Left cardiac atrium (tissue), 4 donors: ENCODE measurements at regions of chr6 and their contacts with region 1.

Region 1: GRCh38 chr6:126721581-126722145 is 381.7 kb downstream of the CENPW start:
- DNase-seq: no peak
- ATAC-seq: peak in 1 of 2 donors; percentile 68

Region 2: GRCh38 chr6:126614642-126615452 is 106.8 kb before region 1 on chr6:
- intact Hi-C with region 1: no loop called
- DNase-seq: no peak
- ATAC-seq: no peak

Region 3: DNA sequence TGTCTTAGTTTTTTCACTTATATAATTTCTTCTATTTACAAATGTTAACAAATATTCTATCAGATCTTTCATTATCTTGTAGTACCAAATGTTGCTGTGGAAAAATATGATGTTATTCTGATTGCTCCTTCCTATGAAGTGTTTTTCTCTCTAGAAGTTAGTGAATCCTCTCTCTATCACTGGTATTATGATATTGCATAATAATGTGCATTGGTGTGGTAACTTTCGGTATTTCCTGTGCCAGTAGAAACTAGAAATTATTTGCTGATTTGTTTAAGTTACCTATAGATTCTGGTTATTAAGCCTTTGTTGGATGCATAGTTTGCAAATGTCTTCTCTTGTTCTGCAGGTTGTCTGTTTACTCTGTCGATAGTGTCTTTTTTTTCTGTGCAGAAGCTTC is 39.2 kb before region 1 on chr6:
- intact Hi-C with region 1: no loop called
- DNase-seq: no peak
- ATAC-seq: no peak

Region 4: DNA sequence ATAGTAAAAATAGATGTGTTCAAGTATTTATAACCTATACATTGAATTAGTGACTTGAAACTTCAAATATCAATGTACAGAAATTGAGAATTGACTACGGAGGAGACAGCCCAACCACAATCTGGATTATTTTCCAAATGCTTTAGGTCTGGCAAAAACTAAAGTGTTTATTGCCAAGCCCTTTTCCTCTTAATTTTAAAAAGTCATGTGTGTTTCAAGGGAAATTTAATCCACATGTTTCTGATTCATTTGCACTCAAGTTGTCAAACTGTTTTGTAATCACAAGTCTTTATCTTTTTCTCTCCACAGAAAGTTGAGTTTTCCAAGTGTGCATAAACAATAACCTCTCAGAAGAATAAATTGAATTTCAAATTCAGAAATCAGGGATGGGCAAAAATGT is 46.0 kb after region 1 on chr6:
- intact Hi-C with region 1: loop called in 1 of 2 experiments (anchors 2 kb)
- DNase-seq: no peak
- ATAC-seq: no peak

Region 5: GRCh38 chr6:126947070-126947469 is 225.4 kb after region 1 on chr6:
- intact Hi-C with region 1: no loop called
- DNase-seq: peak; percentile 25
- ATAC-seq: peak in 1 of 2 donors; percentile 41

Region 6: GRCh38 chr6:128179876-128180438 is 1458.3 kb after region 1 on chr6:
- intact Hi-C with region 1: no loop called
- DNase-seq: no peak
- ATAC-seq: no peak